Vagina (tissue), 2 donors: ENCODE measurements at regions of chr15 and their contacts with region 1.

Region 1: DNA sequence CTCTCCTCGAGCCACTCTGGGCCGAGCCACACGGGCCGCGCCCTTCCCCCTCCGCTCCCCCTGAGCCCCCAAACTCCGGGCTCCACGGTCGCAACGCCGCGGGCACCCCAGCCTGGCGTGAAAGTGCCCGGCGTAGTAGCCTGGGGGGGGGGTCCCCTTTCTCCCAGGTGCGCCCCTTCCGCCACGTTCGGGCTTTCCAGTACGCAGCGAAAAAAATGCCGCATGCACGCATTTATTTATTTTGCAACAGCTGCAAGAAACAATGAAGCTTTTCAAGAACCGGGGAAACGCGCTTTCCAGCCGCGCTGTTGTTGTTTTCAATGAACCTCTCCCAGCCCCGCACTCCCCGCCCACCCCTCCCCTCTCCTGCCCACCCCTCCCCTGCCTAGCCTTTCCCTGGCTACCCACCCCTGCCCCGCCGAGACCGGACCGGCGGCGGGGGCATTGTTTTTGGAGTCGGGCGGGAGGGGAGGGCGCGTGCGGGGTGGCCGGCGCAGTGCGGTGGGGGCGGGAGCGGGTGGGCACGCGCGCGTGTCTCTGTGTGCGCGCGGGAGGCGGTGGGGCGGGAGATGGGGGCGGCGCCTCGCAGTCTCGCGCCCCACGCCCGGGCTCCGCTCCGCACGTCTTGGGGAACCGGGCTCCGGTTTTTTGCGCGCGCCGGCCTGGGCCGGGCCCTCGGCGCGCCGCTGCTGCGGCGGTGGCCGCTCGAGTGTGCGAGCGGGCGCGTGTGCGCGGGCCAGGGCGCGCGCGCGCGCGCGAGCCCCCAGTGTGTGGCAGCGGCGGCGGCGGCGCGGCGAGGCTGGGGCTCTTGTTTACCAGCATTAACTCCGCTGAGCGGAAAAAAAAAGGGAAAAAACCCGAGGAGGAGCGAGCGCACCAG is at the start of gene IGF1R:
- DNase-seq: no peak
- H3K4me3 ChIP-seq: peak within 1 kb of the TSS; percentile 71 to 82
- H3K27ac ChIP-seq: peak within 1 kb of the TSS; percentile 95
- H3K4me1 ChIP-seq: peaks cover 14% of the 10 kb centered on the region
- H3K27me3 ChIP-seq: no peaks in the 10 kb centered on the region
- CTCF ChIP-seq: peak in 2 of 3 experiments; percentile 0 to 31
- POLR2A ChIP-seq: peak in 1 of 2 donors; percentile 18
- total RNA-seq, gene IGF1R: 97.7 TPM

Region 2: GRCh38 chr15:98853161-98853560 is 205.1 kb after region 1 on chr15:
- intact Hi-C with region 1: loop called (anchors 1 kb)
- DNase-seq: no peak
- H3K4me3 ChIP-seq: peak overlapping the region; percentile 54 to 65
- H3K27ac ChIP-seq: peak overlapping the region; percentile 94
- H3K4me1 ChIP-seq: peaks cover 69% of the 10 kb centered on the region
- H3K27me3 ChIP-seq: no peaks in the 10 kb centered on the region
- CTCF ChIP-seq: peak in 1 of 3 experiments; percentile 21
- POLR2A ChIP-seq: peak in 1 of 2 donors; percentile 75

Region 3: DNA sequence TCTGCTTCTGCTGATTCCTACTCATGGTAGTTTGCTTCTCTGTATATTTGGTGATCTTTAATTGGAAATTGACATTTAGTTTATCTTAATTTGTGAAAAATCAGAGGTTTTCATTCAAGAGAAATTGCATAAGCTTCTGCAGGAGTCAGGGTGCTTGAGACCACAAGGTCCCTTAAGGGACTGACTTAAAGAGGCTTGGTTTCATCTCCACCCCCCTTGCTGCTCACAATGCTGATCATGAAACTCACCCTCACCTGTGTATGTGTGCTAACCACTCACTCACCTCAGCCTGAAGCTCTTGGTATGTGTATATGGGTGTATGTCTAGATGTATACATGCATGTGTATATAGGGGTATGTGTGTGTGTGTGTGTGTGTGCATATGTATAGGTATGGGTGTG is 348.2 kb after region 1 on chr15:
- intact Hi-C with region 1: no loop called
- DNase-seq: no peak
- H3K4me3 ChIP-seq: no peak overlapping the region
- H3K27ac ChIP-seq: no peak overlapping the region
- H3K4me1 ChIP-seq: no peaks in the 10 kb centered on the region
- H3K27me3 ChIP-seq: no peaks in the 10 kb centered on the region
- CTCF ChIP-seq: no peak
- POLR2A ChIP-seq: no peak

Region 4: DNA sequence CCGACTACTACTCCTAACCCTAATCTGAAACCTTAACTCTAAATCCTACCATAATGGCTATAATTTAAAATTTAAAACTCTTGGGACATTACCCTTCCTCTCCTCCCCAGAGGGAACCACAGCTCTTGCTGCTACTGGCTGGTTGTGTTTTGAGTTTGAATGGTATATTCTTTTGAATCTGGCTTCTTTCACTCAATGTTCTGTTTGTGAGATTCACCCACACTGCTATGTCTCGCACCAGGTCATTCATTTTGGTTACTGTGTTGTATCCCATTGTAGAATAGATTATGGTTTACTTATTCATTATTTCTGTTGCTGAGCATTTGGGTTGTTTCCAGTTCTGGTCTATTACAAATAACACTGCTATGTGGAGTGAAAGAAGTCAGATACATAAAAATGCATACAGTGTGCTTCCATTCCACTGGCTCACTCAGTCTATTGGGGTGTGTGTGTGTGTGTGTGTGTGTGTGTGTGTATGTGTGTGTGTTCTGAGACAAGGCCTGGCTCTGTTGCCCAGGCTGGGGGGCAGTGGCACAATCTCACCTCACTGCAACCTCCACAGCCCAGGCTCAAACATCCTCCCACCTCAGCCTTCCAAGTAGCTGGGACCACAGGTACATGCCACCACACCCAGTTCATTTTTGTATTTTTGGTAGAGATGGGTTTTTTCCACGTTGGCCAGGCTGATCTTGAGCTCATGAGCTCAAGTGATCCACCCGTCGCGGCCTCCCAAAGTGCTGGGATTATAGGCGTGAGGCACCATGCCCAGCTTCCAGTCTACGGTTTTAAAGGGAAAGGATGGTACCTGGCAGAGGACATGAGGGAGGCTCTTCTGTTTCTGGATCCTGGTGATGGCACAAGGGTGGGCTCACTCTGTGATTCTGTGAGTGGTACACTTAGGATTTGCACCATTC is 437.7 kb after region 1 on chr15:
- intact Hi-C with region 1: loop called (anchors 10 kb)
- DNase-seq: no peak
- H3K4me3 ChIP-seq: no peak overlapping the region
- H3K27ac ChIP-seq: no peak overlapping the region
- H3K4me1 ChIP-seq: no peaks in the 10 kb centered on the region
- H3K27me3 ChIP-seq: no peaks in the 10 kb centered on the region
- CTCF ChIP-seq: no peak
- POLR2A ChIP-seq: no peak